WTC11 (cell line): ENCODE measurements at regions of chr6 and their contacts with region 1.

Region 1: GRCh38 chr6:145734486-145735355 is 599 bp downstream of the EPM2A start:
- DNase-seq: peak; percentile 82
- ATAC-seq: peak; percentile 84
- H3K4me3 Mint-ChIP-seq: peak overlapping the region; percentile 86
- H3K27ac Mint-ChIP-seq: peak overlapping the region; percentile 94
- H3K4me1 Mint-ChIP-seq: peaks cover 18% of the 10 kb centered on the region
- H3K27me3 Mint-ChIP-seq: no peaks in the 10 kb centered on the region
- CTCF ChIP-seq: no peak

Region 2: GRCh38 chr6:145814501-145815308 is 80.0 kb after region 1 on chr6 and contains the start of gene FBXO30:
- CTCF ChIA-PET with region 1: interaction called, 7 read pairs
- POLR2A ChIA-PET with region 1: interaction called, 44 read pairs
- DNase-seq: peak; percentile 85
- ATAC-seq: peak; percentile 81
- H3K4me3 Mint-ChIP-seq: peak within 1 kb of the TSS; percentile 89
- H3K27ac Mint-ChIP-seq: peak within 1 kb of the TSS; percentile 94
- H3K4me1 Mint-ChIP-seq: peaks cover 41% of the 10 kb centered on the region
- H3K27me3 Mint-ChIP-seq: no peaks in the 10 kb centered on the region
- CTCF ChIP-seq: no peak
- total RNA-seq, gene FBXO30: 11.7 to 11.8 TPM (median 11.8 TPM) in 3 replicates

Region 3: DNA sequence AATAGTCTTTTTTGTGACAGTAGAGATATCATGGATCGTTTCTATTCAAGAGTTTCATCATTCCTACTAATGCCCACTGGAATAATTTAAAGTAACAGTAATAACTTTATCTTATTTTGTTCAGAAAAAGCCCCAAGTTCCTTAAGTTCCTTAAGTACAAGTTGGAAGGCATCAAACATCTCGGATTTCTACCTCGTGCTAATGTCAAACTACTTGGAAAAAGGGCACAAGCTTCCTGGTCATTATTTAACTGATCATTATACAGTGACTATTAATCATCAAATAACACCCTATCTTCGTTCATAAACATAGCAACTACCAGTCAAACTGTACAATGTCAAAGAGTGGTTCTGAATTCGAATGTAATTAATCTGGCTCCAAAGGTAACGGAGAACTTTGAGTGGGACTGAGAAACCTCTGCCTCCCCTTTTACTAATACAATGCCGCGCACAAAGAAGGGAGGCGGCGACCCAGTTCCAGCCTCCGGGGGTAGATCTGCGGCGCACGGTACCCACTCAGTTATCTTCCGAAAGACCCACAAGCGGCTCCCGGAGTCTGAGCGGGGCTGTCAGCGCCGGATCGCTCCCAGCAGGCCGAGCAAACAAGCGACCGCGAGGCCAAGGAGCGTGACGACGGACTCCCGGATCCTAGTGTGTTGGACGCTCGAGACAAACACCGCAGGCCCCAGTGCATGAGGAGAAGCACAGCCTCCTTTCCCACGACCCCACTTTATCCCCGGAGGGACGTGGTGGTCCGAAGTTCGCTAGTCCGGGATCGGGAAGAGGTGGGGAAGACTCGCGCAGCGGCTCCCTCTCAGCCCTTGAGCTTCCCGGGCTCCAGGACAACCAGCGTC is 228.7 kb after region 1 on chr6:
- CTCF ChIA-PET with region 1: no interaction called
- POLR2A ChIA-PET with region 1: interaction called, 11 read pairs
- DNase-seq: peak; percentile 51
- ATAC-seq: peak; percentile 11
- H3K4me3 Mint-ChIP-seq: peak overlapping the region; percentile 86
- H3K27ac Mint-ChIP-seq: peak overlapping the region; percentile 50; the same call in 1 of the 2 replicates
- H3K4me1 Mint-ChIP-seq: peaks cover 29% of the 10 kb centered on the region
- H3K27me3 Mint-ChIP-seq: peaks cover 5% of the 10 kb centered on the region; the same call in 1 of the 2 replicates
- CTCF ChIP-seq: no peak